Ascending aorta (tissue), 2 donors: ENCODE measurements at regions of chr4 and their contacts with region 1.

Region 1: DNA sequence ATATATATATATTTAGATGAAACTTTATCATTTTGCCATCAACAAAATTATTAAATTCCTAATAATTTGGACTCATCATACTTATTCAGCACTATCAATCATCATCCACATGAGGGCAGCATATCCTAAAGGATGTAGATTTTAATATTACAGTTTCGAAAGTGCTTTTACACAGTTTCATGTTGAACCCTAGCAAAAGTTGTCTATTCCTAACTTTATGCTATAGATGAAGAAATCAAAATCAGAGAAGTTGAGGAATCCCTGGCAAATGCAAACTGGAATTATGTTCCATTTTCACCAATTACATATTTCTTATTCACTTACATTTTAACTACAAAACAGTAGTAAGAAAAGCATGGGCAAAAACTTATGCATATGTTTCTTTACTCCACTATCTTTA is 36.6 kb upstream of the UGT2A1 start:
- DNase-seq: no peak
- H3K4me3 ChIP-seq: no peak overlapping the region
- H3K27ac ChIP-seq: no peak overlapping the region
- H3K4me1 ChIP-seq: no peaks in the 10 kb centered on the region
- H3K27me3 ChIP-seq: no peaks in the 10 kb centered on the region
- CTCF ChIP-seq: peak in 2 of 3 experiments; percentile 25 to 42

Region 2: DNA sequence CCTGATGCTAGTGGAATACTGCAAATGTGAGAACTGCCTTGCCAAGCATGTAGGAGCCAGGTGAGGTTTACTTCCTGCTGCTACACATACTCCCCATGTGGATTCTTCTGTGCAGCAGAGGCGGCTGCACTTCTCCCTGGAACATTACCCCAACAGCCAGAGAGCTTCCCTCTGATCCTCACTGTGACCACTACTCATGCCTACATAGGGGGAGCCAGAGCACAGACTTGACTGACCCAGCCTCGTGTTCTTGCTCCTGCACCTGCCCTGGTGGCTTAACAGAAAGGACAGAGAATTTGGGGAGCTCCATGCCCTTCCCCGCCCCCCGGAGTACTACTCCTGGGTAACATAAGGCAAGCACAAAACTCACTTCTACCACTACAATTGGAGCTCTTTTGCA is 88.5 kb before region 1 on chr4:
- intact Hi-C with region 1: no loop called
- DNase-seq: no peak
- H3K4me3 ChIP-seq: no peak overlapping the region
- H3K27ac ChIP-seq: no peak overlapping the region
- H3K4me1 ChIP-seq: no peaks in the 10 kb centered on the region
- H3K27me3 ChIP-seq: no peaks in the 10 kb centered on the region
- CTCF ChIP-seq: no peak

Region 3: DNA sequence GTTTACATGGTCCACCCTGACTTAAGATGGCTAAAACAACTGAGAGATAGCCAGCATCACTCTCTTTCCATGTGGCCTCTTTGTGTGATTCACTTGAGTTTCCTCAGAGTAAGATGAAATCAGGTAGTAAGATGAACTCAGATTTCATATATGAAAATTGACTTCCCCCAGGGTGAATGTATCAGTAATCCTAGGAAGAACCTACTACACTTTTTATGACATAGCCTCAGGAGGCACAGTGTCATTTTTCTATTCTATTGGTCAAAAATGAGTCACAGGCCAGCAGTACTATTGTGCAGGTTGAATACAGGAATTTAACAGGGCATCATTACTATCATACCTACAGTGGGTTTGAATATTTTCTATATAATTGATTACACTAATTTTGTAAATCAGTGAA is 184.9 kb after region 1 on chr4:
- intact Hi-C with region 1: loop called (anchors 10 kb)
- DNase-seq: no peak
- H3K4me3 ChIP-seq: no peak overlapping the region
- H3K27ac ChIP-seq: no peak overlapping the region
- H3K4me1 ChIP-seq: no peaks in the 10 kb centered on the region
- H3K27me3 ChIP-seq: no peaks in the 10 kb centered on the region
- CTCF ChIP-seq: no peak

Region 4: DNA sequence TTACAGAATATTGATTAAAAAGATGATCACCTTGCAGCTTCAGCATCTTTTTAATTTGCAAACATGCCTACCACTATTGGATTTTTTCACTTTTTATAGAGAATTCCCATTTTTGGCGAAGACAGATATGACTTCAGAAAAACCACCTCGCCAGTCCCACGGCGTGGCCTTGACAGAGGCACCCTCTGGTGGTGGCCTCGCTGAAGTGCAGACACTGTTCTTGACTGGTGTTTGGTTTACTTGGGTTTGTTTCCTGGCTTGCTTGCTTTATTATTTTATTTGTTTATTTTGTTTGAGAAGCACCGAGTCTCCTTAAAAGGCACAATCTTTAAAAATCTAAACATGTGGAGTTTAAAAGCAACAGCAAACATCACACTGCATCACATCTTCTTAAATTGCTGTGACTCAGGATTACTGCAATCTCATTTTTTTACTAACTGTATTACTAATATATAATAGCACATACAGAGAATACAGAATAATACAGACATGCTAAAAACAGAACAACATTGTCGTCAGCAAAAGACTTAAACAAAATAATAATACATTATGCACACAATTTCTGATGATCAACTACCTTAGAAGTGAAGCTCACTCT is 815.7 kb after region 1 on chr4:
- intact Hi-C with region 1: loop called (anchors 2 kb)
- DNase-seq: peak in 1 of 2 donors; percentile 67
- H3K4me3 ChIP-seq: no peak overlapping the region
- H3K27ac ChIP-seq: no peak overlapping the region
- H3K4me1 ChIP-seq: no peaks in the 10 kb centered on the region
- H3K27me3 ChIP-seq: no peaks in the 10 kb centered on the region
- CTCF ChIP-seq: peak; percentile 35 to 79 (median 61)